PC-9 (cell line): ENCODE measurements at regions of chr5 and their contacts with region 1.

Region 1: GRCh38 chr5:87069974-87070624 is 197.6 kb upstream of the RASA1 start:
- DNase-seq: peak; percentile 37 to 45
- H3K4me3 ChIP-seq: no peak overlapping the region
- H3K27ac ChIP-seq: no peak overlapping the region
- H3K4me1 ChIP-seq: peaks cover 19% of the 10 kb centered on the region
- H3K27me3 ChIP-seq: no peaks in the 10 kb centered on the region
- CTCF ChIP-seq: peak; percentile 65

Region 2: DNA sequence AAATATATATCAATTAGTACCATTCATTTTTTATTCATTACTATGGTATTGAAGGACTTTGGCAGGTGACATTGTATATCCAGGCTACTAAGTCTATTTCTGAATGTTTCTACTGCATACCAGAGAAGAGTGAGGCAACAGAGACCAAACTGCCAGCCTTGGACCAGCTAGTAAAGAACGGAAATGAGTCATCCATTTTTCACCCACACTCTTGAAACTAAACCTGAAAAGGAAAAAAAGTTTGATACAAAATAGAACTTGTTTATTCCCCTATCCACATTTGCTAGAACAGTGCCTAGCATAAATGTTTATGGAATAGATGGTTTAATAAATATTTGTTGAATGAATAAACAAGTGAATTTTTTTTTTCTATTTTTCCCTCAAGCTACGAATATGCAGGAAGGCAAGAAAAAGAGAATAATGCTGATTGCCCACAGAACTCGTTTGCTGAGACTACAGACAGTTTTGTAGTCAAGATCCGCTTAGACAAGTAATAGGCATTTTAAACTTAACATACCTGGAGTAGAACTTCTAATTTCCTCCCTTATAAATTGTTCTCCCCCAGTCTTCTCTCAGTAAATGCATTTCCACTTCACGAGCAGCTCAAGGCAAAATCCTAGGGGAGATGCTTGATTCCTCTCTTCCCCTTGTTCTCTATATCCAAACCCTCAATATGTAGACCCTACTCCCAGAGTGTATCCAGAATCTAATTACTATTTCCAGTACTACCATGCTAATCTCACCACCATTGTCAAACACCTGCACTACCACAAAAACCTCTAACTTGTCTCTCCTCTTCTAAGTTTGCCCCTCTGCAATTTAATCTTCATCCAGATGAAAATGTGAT is 51.4 kb after region 1 on chr5:
- CTCF ChIA-PET with region 1: no interaction called
- POLR2A ChIA-PET with region 1: no interaction called
- intact Hi-C with region 1: loop called (anchors 1 kb)
- DNase-seq: peak; percentile 38 to 83
- H3K4me3 ChIP-seq: peak overlapping the region; percentile 13; the same call in 1 of the 2 replicates
- H3K27ac ChIP-seq: peak overlapping the region; percentile 92
- H3K4me1 ChIP-seq: peaks cover 52% of the 10 kb centered on the region
- H3K27me3 ChIP-seq: no peaks in the 10 kb centered on the region
- CTCF ChIP-seq: no peak

Region 3: DNA sequence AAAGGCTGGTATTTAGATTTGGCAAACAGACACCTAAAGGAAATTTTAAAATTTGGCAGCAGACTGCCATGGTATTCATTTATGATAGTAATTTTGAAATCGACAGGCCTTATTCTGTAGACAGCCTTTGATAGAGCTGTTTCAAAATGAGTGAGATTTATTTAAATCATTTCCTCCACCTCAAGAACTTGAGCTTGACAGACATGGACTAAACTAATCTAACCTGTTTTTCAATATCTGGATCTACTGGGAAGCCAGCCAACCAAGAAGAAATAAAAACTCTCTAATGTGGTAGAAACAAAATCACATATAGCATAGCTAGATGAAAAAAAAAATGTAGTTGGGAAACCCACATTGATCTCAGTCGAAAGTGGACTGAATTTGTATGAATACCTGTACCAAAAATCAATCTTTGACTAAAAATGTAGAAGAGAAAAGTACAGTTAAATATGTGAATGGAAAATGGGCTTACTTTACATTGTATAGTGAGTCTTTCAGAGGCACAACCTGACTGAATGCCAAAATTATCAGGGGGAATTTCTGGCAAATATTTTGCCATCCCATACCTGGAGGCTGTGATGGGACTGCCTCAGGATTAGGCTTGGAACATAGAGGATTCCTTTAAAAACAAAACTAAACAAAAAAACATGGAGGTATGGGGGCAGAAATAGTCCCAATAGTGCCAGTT is 140.8 kb after region 1 on chr5:
- CTCF ChIA-PET with region 1: no interaction called
- POLR2A ChIA-PET with region 1: interaction called, 4 read pairs
- intact Hi-C with region 1: loop called (anchors 5 kb)
- DNase-seq: peak in 1 of 2 experiments; percentile 88
- H3K4me3 ChIP-seq: no peak overlapping the region
- H3K27ac ChIP-seq: peak overlapping the region; percentile 48
- H3K4me1 ChIP-seq: peaks cover 20% of the 10 kb centered on the region
- H3K27me3 ChIP-seq: no peaks in the 10 kb centered on the region
- CTCF ChIP-seq: no peak

Region 4: DNA sequence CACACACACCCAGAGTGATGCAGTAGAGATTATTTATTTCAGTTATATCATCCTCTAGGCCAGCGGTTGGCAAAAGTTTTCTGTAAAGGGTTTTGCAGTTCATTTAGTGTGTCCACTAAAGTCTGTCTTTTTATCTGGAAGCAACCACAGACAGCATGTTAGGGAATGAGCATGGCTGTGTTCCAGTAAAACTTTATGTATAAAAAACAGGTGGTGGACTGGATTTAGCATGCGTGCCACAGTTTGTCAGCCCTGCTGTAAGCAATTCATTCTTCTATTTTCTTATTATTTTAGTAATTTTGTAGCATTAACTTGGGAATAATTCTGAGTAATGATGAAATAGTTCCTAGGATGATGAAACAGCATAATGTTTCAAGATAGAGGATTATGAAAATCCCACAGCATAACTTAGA is 290.9 kb after region 1 on chr5:
- CTCF ChIA-PET with region 1: no interaction called
- POLR2A ChIA-PET with region 1: no interaction called
- intact Hi-C with region 1: loop called (anchors 10 kb)
- DNase-seq: no peak
- H3K4me3 ChIP-seq: no peak overlapping the region
- H3K27ac ChIP-seq: peak overlapping the region; percentile 41; the same call in 1 of the 2 replicates
- H3K4me1 ChIP-seq: no peaks in the 10 kb centered on the region
- H3K27me3 ChIP-seq: no peaks in the 10 kb centered on the region
- CTCF ChIP-seq: no peak

Region 5: DNA sequence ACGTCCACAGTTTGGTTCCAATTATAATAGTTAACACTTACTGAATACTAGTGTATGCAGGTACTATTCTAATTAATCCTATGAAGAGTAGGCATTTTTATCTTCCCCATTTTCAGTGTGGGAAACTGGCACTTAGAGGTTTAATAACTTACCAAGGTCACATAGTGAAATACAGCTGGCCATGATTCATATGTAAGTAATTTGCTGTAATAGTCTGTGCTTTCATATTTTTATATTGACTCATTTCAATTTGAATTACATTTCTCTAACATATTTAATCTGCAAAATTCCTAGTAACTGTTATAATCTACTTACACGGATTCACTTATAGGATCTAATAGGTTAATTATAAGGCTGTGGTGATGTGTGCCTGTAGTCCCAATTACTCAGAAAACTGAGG is 323.2 kb after region 1 on chr5:
- CTCF ChIA-PET with region 1: no interaction called
- POLR2A ChIA-PET with region 1: no interaction called
- intact Hi-C with region 1: no loop called
- DNase-seq: peak in 1 of 2 experiments; percentile 75
- H3K4me3 ChIP-seq: no peak overlapping the region
- H3K27ac ChIP-seq: peak overlapping the region; percentile 56
- H3K4me1 ChIP-seq: peaks cover 24% of the 10 kb centered on the region
- H3K27me3 ChIP-seq: no peaks in the 10 kb centered on the region
- CTCF ChIP-seq: no peak